ENCODE measurements at regions of chr14 and their contacts with region 1.

Region 1: DNA sequence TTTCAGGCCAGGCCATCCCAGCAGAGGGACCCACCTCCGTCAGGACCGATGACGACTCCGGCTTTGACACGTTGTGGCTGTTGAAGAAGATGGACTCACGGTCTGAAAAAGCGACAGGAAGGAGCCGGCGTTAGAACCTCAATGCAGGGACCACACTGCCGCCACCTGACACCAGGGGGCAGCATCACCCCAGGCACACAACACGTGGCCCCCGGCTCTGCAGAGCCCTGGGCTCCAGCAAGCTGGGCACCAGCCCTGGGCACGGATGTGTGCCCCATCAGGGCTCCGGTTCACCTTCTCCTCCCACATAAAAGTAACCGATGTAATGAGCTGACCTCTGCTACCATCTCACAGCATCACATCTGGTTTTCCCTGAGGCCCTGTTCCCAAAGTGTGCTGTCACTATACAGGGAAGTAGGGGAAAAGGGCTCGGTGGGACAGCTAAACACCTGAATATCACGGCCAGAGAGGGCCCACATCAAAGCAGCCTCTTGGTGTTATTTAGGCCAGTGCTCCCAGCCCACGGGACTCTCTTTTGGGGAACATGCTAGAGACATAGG is 29.0 kb downstream of the CHGA start:
- DNase-seq: peak; percentile 66
- H3K4me3 Mint-ChIP-seq: no peak overlapping the region
- H3K27ac Mint-ChIP-seq: peak overlapping the region; percentile 15
- H3K4me1 Mint-ChIP-seq: no peaks in the 10 kb centered on the region
- H3K27me3 Mint-ChIP-seq: no peaks in the 10 kb centered on the region

Region 2: DNA sequence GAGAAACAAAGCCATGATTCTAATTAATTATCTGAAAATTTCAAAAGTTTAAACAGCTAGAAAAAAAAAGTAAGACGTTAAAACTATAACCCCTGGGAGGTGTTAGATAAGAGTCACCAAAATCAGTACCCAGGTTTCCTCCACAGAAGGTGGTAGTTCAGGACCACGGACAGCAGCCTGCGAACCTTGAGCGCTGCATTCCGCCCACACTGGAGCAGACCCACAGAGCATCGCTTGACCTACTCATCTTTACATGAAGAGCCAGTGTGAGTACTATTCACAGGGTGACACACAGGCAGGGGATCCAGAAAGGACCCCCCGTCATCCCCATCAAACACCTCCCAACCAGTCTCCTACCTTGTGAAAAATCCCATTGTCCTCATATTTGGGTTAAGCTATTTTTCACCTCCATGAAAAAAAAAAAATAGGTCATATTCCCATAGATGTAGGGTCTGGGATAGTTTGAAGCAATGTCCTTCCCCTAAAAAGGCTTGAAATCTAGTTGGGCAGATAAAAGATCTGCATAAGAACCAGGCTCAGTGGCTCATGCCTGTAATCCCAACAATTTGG is 37.8 kb before region 1 on chr14:
- intact Hi-C with region 1: no loop called
- DNase-seq: peak; percentile 7
- H3K4me3 Mint-ChIP-seq: no peak overlapping the region
- H3K27ac Mint-ChIP-seq: no peak overlapping the region
- H3K4me1 Mint-ChIP-seq: no peaks in the 10 kb centered on the region
- H3K27me3 Mint-ChIP-seq: peaks cover 2% of the 10 kb centered on the region

Region 3: DNA sequence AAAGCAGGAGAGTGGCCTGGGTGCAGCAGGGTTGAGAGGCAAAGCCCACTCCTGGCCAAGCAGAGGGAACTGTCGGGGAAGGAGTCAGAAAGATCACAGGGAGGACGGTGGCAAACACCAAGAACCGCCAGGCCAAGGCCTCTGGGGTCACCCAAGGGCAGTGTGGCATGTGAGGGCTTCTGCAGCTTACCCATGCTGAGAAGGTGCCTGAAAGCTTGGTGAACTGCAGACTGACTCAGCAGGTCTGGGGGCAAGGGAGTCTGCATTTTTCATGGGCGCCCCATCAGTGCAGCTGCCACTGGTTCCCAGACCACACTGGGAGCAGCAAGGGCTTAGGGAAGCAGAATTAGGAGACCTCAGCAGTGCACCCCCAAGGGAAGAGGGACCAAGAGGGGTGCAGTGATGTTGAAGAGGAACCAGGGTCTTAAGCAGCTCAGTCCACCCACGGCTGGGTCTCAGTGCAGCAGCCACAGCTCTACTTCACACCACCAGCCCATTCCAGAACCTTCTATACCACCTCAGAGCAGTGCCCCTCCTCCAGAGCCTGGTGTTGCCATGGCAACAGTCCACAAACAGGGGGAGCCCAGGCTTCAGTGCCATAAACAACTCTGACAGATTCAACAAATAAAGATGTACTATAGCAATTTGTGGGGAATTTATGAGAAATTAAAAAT is 104.3 kb after region 1 on chr14:
- intact Hi-C with region 1: no loop called
- DNase-seq: no peak
- H3K4me3 Mint-ChIP-seq: no peak overlapping the region
- H3K27ac Mint-ChIP-seq: no peak overlapping the region
- H3K4me1 Mint-ChIP-seq: peaks cover 12% of the 10 kb centered on the region
- H3K27me3 Mint-ChIP-seq: no peaks in the 10 kb centered on the region

Region 4: GRCh38 chr14:93137864-93138263 is 185.9 kb after region 1 on chr14:
- intact Hi-C with region 1: loop called (anchors 1 kb)
- DNase-seq: no peak
- H3K4me3 Mint-ChIP-seq: no peak overlapping the region
- H3K27ac Mint-ChIP-seq: no peak overlapping the region
- H3K4me1 Mint-ChIP-seq: peaks cover 5% of the 10 kb centered on the region
- H3K27me3 Mint-ChIP-seq: no peaks in the 10 kb centered on the region

Region 5: DNA sequence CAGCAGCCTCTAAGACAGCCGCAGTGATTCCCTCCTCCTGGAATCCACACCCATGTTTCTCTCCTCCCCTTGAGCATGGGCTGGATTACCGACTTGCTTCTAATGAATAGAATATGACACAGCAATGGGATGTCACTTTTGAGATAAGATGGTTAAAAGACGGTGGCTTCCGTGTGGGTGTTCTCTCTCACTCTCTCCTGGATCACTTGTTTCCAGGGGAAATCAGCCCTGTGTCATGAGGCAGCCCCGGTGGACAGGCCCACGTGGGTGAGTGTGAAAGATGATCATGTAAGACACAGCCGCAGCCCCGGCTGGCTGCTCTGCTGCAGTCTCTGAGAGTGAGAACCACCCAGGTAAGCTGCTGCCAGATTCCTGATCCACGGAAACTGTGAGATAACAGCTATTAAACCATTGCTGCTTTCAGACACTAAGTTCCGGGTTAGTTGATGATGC is 222.0 kb after region 1 on chr14:
- intact Hi-C with region 1: loop called (anchors 1 kb)
- DNase-seq: no peak
- H3K4me3 Mint-ChIP-seq: no peak overlapping the region
- H3K27ac Mint-ChIP-seq: no peak overlapping the region
- H3K4me1 Mint-ChIP-seq: no peaks in the 10 kb centered on the region
- H3K27me3 Mint-ChIP-seq: peaks cover 4% of the 10 kb centered on the region

Region 6: DNA sequence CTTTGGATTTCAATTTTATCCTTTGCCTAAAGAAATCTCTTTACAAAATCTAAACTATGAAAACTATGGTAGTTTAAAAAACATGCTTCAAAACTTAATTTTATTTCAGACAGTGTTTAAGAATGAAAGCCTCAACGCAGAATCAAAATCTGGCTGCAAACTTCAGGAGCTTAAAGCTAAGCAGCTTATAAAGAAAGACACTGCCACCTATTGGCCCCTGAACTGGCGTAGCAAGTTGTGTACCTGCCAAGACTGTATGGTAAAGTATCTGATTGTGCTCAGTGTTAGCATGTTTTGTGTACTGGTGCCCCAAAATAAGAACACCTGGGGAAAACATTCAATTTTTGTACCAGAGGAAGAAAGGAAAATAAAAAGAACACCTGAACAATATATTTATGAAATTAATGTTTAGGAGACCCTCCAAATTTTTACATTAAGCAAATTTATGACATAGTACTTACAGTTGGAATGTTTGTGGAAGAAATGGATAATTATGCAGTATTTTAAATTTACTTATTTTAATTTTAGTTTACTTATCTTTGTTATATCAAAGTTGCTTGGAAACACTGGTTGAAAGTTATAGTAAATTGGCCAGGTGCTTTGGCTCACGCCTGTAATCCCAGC is 267.2 kb after region 1 on chr14:
- intact Hi-C with region 1: loop called (anchors 1 kb)
- DNase-seq: peak; percentile 14
- H3K4me3 Mint-ChIP-seq: no peak overlapping the region
- H3K27ac Mint-ChIP-seq: no peak overlapping the region
- H3K4me1 Mint-ChIP-seq: no peaks in the 10 kb centered on the region
- H3K27me3 Mint-ChIP-seq: no peaks in the 10 kb centered on the region

Measured in activated T-helper 1 cell treated with anti-CD3 and anti-CD28 coated beads, Interleukin-12 subunit alpha, Interleukin-12 subunit beta, Interleukin-2, Interleukin-4 antibody, amounts not matched to agents 30 ng/mL and 10 ng/mL and 1 ng/mL, durations not matched to agents 14 hours and 24 hours and 36 hours (primary cell).